A673 (cell line): ENCODE measurements at regions of chr2 and their contacts with region 1.

Region 1: DNA sequence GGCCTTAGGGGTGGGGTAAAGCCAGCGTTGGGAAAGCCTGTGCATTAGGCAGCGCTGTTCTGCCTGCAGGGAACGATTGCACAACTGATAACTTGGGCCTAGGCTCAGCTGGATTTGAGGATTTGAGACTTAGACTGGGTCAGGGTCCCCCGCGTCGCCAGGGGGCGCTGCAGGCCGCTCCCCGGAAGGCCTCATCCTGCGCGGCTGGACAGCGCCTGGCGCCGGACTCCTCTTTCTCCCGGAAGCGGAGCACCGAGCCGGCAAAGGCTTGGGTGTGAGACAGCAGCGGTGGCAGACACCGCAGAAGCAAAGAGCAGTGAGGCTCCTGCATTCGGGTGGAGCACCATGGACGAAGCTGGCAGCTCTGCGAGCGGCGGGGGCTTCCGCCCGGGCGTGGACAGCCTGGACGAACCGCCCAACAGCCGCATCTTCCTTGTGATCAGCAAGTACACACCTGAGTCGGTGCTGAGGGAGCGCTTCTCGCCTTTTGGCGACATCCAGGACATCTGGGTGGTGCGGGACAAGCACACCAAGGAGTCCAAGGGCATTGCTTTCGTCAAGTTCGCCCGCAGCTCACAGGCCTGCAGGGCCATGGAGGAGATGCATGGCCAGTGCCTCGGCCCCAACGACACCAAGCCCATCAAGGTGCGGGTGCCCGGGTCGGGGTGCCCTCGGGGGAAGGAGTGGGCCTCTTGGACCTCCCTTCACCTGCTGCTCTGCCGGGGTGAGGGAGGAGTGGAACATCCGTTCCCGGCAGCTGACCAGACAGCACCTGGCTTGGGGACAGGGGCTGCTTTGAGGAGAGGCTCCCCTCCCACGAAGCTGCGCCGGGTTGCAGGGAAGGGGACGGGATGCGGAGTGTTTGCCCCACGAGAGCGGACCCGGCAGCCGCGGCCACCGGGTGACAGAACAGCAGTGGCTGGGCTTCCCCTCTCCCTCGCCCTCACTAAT is at the start of gene RBM45:
- DNase-seq: peak; percentile 96
- H3K4me3 ChIP-seq: peak within 1 kb of the TSS; percentile 96
- H3K27ac ChIP-seq: peak within 1 kb of the TSS; percentile 69
- H3K4me1 ChIP-seq: peaks cover 5% of the 10 kb centered on the region
- H3K27me3 ChIP-seq: no peaks in the 10 kb centered on the region
- CTCF ChIP-seq: peak; percentile 98
- total RNA-seq, gene RBM45: 18.7 and 19.0 TPM in 2 replicates

Region 2: DNA sequence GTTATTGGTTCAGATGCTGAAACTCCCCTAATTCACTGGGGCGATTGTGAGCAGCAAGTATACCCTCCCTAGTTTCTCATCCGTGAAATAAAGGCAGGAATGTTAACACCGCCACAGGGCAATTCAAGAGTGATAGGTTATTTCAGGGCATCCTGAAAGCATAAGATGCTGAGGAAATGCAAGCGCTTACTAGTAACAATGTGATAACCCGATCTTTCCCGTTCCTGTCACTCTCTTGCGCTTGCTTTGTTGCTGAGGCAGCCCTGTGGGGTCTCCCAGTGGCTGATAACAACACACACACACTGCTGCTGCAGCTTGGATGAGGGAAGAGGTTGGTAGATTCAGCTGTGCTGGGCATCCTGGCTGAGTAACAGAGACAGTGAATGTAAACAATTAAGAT is 460.6 kb before region 1 on chr2:
- CTCF ChIA-PET with region 1: no interaction called
- POLR2A ChIA-PET with region 1: no interaction called
- intact Hi-C with region 1: no loop called
- DNase-seq: no peak
- H3K4me3 ChIP-seq: no peak overlapping the region
- H3K27ac ChIP-seq: no peak overlapping the region
- H3K4me1 ChIP-seq: no peaks in the 10 kb centered on the region
- H3K27me3 ChIP-seq: no peaks in the 10 kb centered on the region
- CTCF ChIP-seq: no peak

Region 3: GRCh38 chr2:178280244-178280852 is 167.9 kb after region 1 on chr2:
- CTCF ChIA-PET with region 1: interaction called, 7 read pairs
- POLR2A ChIA-PET with region 1: no interaction called
- intact Hi-C with region 1: loop called (anchors 1 kb)
- DNase-seq: peak; percentile 74
- H3K4me3 ChIP-seq: no peak overlapping the region
- H3K27ac ChIP-seq: no peak overlapping the region
- H3K4me1 ChIP-seq: peaks cover 33% of the 10 kb centered on the region
- H3K27me3 ChIP-seq: no peaks in the 10 kb centered on the region
- CTCF ChIP-seq: peak; percentile 72

Region 4: DNA sequence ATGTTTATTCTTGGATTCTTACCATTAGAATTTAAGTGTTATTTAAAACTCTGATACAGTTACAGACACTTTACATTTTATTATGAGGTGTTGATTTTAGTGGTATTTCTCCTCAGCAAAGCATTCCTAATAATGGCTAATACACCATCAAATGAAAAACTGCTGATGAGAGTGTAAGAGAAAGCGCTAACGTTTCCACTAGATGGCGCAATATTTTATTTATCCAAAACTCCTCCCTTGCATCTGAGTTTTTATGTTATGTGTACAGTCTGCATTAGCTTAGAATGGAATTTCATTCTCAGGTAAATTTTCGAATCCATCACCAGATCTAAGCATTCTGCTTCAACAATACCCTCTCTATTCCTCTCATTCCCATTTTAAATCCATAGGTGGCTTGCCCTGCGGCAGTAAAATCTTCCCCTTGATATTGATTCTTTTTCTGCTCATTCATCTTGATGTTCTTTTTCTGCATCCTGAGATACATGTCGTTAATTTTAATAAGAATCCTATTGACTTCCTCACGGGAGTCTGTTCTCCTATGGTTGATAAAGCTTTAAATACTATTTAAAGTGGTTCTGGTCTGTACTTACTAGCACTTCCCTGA is 284.6 kb after region 1 on chr2:
- CTCF ChIA-PET with region 1: no interaction called
- POLR2A ChIA-PET with region 1: no interaction called
- intact Hi-C with region 1: loop called (anchors 5 kb)
- DNase-seq: peak; percentile 61
- H3K4me3 ChIP-seq: no peak overlapping the region
- H3K27ac ChIP-seq: no peak overlapping the region
- H3K4me1 ChIP-seq: no peaks in the 10 kb centered on the region
- H3K27me3 ChIP-seq: no peaks in the 10 kb centered on the region
- CTCF ChIP-seq: peak; percentile 76

Region 5: DNA sequence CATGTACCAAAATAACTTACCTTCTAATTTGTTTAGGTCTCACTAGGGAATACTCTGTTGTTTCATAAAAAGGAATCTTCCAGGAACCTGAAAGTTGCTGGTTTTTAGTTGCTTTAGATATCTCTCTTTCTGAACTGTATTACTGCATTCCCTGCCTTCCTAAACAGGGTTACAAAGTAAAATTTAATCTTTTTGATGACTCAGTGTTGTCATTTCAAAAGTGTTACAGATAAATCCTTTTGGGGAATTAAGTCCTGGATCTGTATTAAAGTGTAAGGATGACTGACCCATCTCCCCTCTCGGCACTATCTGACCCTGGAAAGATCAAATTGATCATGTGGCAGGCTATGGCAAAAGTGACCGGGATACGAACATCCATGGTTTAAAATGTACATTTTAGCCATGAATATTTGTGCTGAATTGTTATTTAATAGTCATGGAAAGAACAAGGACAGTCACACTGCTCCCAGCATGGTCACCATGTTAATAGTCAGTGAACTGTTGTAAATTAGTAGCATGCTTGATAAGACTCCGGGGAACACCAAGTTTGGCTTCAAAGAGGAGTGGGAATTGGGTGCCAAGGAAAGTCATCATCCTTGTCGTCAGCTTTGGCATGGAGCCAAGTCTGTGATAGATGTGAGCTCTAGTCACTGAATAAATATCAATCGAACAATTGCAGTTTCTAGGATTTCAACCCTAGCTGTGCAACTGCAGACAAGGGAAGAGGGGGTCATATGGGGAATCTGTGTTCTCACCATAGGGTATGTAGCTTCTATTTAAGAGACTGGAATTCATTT is 372.0 kb after region 1 on chr2:
- CTCF ChIA-PET with region 1: interaction called, 15 read pairs
- POLR2A ChIA-PET with region 1: no interaction called
- intact Hi-C with region 1: no loop called
- DNase-seq: peak; percentile 61
- H3K4me3 ChIP-seq: no peak overlapping the region
- H3K27ac ChIP-seq: peak overlapping the region; percentile 4
- H3K4me1 ChIP-seq: peaks cover 33% of the 10 kb centered on the region
- H3K27me3 ChIP-seq: no peaks in the 10 kb centered on the region
- CTCF ChIP-seq: no peak